Ascending aorta (tissue), 2 donors: ENCODE measurements at regions of chr2 and their contacts with region 1.

Region 1: DNA sequence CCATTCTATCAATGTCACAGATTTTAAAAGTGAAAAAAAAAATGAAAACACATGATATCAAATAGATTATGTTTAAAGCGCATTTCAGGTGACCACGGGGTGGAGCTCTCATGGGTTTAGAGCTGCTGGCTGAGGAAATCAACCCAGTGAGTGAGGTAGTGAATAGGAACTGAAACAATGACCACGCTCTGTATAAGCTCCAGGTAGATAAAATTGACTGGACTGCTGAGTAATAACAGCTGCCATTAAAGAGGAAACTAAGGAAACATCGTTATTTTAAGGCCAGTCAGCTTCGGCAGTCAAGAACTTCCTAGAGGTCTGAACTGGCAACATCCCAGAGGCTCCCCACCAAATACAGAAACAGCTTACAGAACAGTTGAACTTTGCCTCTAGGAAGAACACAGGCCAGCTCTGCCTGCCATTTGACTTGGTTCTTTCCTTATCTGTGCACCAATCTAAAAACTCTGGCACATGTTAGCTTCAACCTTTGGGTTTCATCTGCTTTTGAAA is 185.9 kb downstream of the PDE1A start:
- DNase-seq: no peak
- H3K4me3 ChIP-seq: no peak overlapping the region
- H3K27ac ChIP-seq: no peak overlapping the region
- H3K4me1 ChIP-seq: no peaks in the 10 kb centered on the region
- H3K27me3 ChIP-seq: no peaks in the 10 kb centered on the region
- CTCF ChIP-seq: peak in 2 of 3 experiments; percentile 14 to 34

Region 2: DNA sequence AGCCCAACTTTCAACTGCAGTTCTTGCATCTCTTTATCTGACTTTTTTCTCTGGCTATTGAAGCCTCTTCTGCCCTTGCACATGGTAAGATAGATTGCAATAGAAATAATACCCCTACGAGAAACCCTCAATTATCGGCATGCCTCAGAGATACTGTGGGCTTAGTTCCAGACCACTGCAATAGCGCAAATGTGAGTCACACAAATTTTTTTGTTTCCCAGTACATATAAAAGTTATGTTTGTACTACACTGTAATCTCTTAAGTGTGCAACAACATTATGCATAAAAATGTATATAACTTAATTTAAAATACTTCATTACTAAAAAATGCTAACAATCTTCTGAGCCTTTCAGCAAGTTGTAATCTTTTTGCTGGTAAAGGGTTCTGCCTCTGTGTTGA is 61.3 kb after region 1 on chr2:
- intact Hi-C with region 1: no loop called
- DNase-seq: no peak
- H3K4me3 ChIP-seq: no peak overlapping the region
- H3K27ac ChIP-seq: no peak overlapping the region
- H3K4me1 ChIP-seq: no peaks in the 10 kb centered on the region
- H3K27me3 ChIP-seq: no peaks in the 10 kb centered on the region
- CTCF ChIP-seq: no peak

Region 3: GRCh38 chr2:182426082-182426917 is 185.4 kb after region 1 on chr2:
- intact Hi-C with region 1: loop called (anchors 10 kb)
- DNase-seq: no peak
- H3K4me3 ChIP-seq: peak overlapping the region; percentile 48 to 63
- H3K27ac ChIP-seq: peak overlapping the region; percentile 64 to 67
- H3K4me1 ChIP-seq: no peaks in the 10 kb centered on the region
- H3K27me3 ChIP-seq: no peaks in the 10 kb centered on the region
- CTCF ChIP-seq: no peak